ENCODE measurements at regions of chr7 and their contacts with region 1.

Region 1: DNA sequence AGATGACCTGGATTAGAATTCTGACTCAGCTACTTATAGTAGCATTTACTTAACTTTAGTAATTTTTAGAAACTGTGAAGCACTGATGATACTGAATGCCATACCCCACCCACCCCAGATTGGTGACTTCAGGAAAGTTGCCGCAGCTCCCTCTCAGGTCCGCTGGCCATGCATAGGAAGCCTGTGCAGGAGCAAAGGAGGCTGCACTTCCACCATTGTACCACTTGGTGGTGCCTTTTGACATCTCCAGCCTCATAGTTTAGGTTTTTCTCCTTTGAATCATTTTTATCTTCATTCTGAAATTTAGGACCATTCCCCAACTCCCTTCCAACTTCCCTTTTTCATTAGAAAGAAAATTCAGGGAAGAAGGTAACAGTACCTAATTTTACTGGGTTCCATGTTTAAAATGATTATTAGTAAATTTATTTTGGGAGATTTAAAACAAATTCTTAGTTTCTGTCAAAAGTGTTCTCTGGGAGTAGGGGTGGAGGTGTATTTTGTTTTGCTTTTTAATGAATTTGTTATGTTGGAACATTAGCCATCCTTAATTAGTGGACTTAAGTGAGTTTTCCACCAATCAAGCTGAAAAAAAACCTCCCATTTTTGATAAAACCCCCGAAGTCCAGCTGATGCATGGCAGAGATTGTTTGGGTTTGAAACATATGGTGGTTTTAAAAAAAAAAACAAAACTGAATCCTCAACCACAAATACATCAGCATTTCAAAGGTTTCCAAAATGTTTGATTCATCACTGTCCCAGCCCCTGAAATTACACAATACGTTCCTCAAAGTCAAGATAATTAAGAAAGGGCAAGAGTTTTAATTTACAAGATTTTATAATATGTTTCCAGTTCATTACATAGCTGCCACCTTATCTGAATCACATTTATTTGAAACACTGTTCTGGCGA is 109.6 kb downstream of the WNT2 start:
- DNase-seq: no peak
- ATAC-seq: no peak

Region 2: GRCh38 chr7:116809636-116810266 is 403.5 kb before region 1 on chr7:
- intact Hi-C with region 1: no loop called
- DNase-seq: no peak
- ATAC-seq: peak; percentile 52

Region 3: GRCh38 chr7:117296066-117296465 is 82.8 kb after region 1 on chr7:
- intact Hi-C with region 1: no loop called
- DNase-seq: no peak
- ATAC-seq: no peak

Region 4: GRCh38 chr7:117385340-117386109 is 172.3 kb after region 1 on chr7:
- intact Hi-C with region 1: loop called (anchors 5 kb)
- DNase-seq: no peak
- ATAC-seq: no peak